ENCODE measurements at regions of chr6 and their contacts with region 1.

Region 1: GRCh38 chr6:42901536-42901957 is 14.3 kb upstream of the PTCRA start:
- DNase-seq: peak; percentile 92
- ATAC-seq: peak; percentile 94
- H3K4me3 ChIP-seq: peak overlapping the region; percentile 48 to 71 (median 63)
- H3K27ac ChIP-seq: no peak overlapping the region
- H3K4me1 ChIP-seq: peaks cover 38% of the 10 kb centered on the region
- H3K27me3 ChIP-seq: no peaks in the 10 kb centered on the region
- CTCF ChIP-seq: peak; percentile 98
- EP300 ChIP-seq: 0 out of 4 replicates have a peak, but pooled peaks of 1 of the 2 experiments have one; percentile 16
- POLR2A ChIP-seq: no peak
- RAD21 ChIP-seq: peak; percentile 96

Region 2: GRCh38 chr6:42661540-42662153 is 239.9 kb before region 1 on chr6:
- CTCF ChIA-PET with region 1: interaction called, 15 read pairs
- POLR2A ChIA-PET with region 1: no interaction called
- in situ Hi-C with region 1: no loop called
- intact Hi-C with region 1: loop called (anchors 1 kb)
- DNase-seq: peak; percentile 78
- ATAC-seq: peak; percentile 83
- H3K4me3 ChIP-seq: no peak overlapping the region
- H3K27ac ChIP-seq: no peak overlapping the region
- H3K4me1 ChIP-seq: no peaks in the 10 kb centered on the region
- H3K27me3 ChIP-seq: no peaks in the 10 kb centered on the region
- CTCF ChIP-seq: peak; percentile 88
- EP300 ChIP-seq: no peak
- POLR2A ChIP-seq: no peak
- RAD21 ChIP-seq: peak; percentile 86

Region 3: GRCh38 chr6:42890311-42891198 is 11.0 kb before region 1 on chr6:
- CTCF ChIA-PET with region 1: no interaction called
- POLR2A ChIA-PET with region 1: no interaction called
- in situ Hi-C with region 1: no loop called
- intact Hi-C with region 1: no loop called
- DNase-seq: peak; percentile 95
- ATAC-seq: peak; percentile 91
- H3K4me3 ChIP-seq: peak overlapping the region; percentile 75 to 95 (median 86)
- H3K27ac ChIP-seq: peak overlapping the region; percentile 94
- H3K4me1 ChIP-seq: peaks cover 46% of the 10 kb centered on the region
- H3K27me3 ChIP-seq: no peaks in the 10 kb centered on the region
- CTCF ChIP-seq: 0 out of 2 replicates have a peak, but pooled peaks have one; percentile 36
- EP300 ChIP-seq: no peak
- POLR2A ChIP-seq: peak; percentile 92 to 95
- RAD21 ChIP-seq: peak; percentile 78

Region 4: DNA sequence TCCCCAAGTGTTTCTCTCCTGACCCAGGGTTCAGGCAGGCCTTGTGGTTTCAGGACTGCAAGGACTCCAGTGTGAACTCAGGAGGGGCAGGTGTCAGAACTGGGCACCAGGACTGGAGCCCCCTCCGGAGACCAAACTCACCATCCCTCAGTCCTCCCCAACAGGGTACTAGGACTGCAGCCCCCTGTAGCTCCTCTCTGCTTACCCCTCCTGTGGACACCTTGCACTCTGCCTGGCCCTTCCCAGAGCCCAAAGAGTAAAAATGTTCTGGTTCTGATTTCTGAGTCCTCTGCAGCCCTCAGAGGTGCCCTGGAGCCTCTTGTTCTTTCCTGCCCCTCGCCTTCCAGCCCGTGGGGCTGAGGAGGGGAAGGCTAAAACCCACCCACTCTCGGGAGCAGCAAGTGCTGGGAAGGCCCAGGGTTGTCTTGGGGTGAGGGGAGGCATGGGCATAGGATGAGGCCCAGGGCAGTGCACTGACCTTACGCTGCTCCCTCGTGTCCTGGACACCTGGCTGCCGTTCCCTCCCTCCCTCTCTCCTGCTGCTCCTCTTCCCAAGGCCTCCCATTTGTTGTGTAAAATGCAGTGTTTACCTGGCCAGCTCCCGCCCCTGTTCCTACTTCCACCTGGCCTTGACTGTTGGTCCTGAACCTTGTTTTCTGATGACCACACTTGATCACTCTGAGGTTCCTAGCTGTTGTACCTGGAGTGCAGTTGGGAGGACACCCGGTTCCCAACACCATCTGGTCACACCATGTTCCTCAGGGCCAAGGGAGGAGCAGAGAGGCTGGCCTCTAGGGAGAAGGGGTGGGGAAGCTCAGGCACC is 37.7 kb after region 1 on chr6:
- CTCF ChIA-PET with region 1: interaction called, 3 read pairs
- POLR2A ChIA-PET with region 1: interaction called, 7 read pairs
- in situ Hi-C with region 1: no loop called
- intact Hi-C with region 1: loop called (anchors 5 kb)
- DNase-seq: peak; percentile 86
- ATAC-seq: peak; percentile 87
- H3K4me3 ChIP-seq: peak overlapping the region in 1 of 3 experiments; percentile 20; a peak in 1 of 6 replicates
- H3K27ac ChIP-seq: peak overlapping the region; percentile 81
- H3K4me1 ChIP-seq: peaks cover 64% of the 10 kb centered on the region
- H3K27me3 ChIP-seq: no peaks in the 10 kb centered on the region
- CTCF ChIP-seq: peak; percentile 30; the same call in 1 of the 2 replicates
- EP300 ChIP-seq: peak; percentile 28 to 89; a peak in 3 of 4 replicates
- POLR2A ChIP-seq: no peak; a peak in 1 of 4 replicates
- RAD21 ChIP-seq: peak; percentile 44; the same call in 1 of the 2 replicates

Region 5: GRCh38 chr6:42963855-42964605 is 62.5 kb after region 1 on chr6:
- CTCF ChIA-PET with region 1: no interaction called
- POLR2A ChIA-PET with region 1: no interaction called
- in situ Hi-C with region 1: no loop called
- intact Hi-C with region 1: loop called (anchors 1 kb)
- DNase-seq: peak; percentile 76
- ATAC-seq: peak; percentile 44
- H3K4me3 ChIP-seq: no peak overlapping the region
- H3K27ac ChIP-seq: no peak overlapping the region
- H3K4me1 ChIP-seq: peaks cover 35% of the 10 kb centered on the region
- H3K27me3 ChIP-seq: no peaks in the 10 kb centered on the region; a peak in 1 of 5 replicates
- CTCF ChIP-seq: peak; percentile 72
- EP300 ChIP-seq: no peak
- POLR2A ChIP-seq: no peak
- RAD21 ChIP-seq: peak; percentile 62

Region 6: DNA sequence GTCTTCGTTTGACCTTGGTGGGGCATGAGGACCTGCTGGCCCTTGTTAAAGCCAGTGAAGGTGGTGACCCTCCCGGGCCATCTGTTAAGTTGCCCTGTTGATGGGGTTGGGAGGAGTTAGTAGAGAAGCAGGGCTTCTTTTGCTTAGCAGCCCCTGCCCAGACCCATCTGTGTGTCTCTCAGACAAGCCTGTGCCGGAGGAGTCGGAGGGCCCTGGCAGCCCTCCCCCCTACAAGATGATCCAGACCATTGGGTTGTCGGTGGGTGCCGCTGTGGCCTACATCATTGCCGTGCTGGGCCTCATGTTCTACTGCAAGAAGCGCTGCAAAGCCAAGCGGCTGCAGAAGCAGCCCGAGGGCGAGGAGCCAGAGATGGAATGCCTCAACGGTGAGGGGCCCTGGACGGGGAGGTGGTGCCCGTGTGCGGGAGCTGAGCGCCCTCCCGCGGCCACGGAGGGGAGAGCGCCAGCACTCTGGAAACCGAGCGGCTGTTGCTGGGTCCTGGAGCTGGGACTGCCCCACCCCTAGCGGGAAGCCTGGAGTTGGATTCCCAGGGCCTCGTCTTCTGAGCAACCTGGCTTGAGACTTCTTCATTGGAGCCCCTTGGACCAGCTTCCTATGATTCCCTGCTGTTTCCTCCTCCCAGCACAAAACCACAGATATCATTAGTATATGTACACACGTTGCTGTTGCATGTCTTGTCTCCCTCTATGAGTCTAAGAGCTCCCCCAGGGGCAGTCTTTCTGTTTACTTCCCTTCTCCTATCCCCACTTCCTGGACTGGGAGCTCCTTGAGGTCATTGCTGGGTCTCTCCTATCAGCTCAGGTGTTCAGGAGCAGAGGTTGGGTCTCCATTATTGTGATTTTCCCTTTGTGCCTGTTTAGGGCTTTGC is 241.9 kb after region 1 on chr6:
- CTCF ChIA-PET with region 1: interaction called, 19 read pairs
- POLR2A ChIA-PET with region 1: interaction called, 4 read pairs
- in situ Hi-C with region 1: loop called (anchors 5 kb)
- intact Hi-C with region 1: loop called (anchors 1 kb)
- DNase-seq: peak; percentile 76
- ATAC-seq: peak; percentile 95
- H3K4me3 ChIP-seq: no peak overlapping the region; a peak in 1 of 6 replicates
- H3K27ac ChIP-seq: no peak overlapping the region
- H3K4me1 ChIP-seq: peaks cover 21% of the 10 kb centered on the region
- H3K27me3 ChIP-seq: no peaks in the 10 kb centered on the region
- CTCF ChIP-seq: peak; percentile 100
- EP300 ChIP-seq: 0 out of 4 replicates have a peak, but pooled peaks of 1 of the 2 experiments have one; percentile 13
- POLR2A ChIP-seq: no peak
- RAD21 ChIP-seq: peak; percentile 100

Measured in HepG2 (cell line).